Psoas muscle (tissue), 8 donors: ENCODE measurements at regions of chr5 and their contacts with region 1.

Region 1: GRCh38 chr5:160199410-160199911 is 29.8 kb upstream of the FABP6 start:
- DNase-seq: peak; percentile 74 to 83
- ATAC-seq: peak; percentile 94 to 100 (median 96)
- H3K4me3 ChIP-seq: peak overlapping the region; percentile 62
- H3K27ac ChIP-seq: no peak overlapping the region
- H3K4me1 ChIP-seq: peaks cover 4% of the 10 kb centered on the region
- H3K27me3 ChIP-seq: no peaks in the 10 kb centered on the region
- CTCF ChIP-seq: peak; percentile 97

Region 2: DNA sequence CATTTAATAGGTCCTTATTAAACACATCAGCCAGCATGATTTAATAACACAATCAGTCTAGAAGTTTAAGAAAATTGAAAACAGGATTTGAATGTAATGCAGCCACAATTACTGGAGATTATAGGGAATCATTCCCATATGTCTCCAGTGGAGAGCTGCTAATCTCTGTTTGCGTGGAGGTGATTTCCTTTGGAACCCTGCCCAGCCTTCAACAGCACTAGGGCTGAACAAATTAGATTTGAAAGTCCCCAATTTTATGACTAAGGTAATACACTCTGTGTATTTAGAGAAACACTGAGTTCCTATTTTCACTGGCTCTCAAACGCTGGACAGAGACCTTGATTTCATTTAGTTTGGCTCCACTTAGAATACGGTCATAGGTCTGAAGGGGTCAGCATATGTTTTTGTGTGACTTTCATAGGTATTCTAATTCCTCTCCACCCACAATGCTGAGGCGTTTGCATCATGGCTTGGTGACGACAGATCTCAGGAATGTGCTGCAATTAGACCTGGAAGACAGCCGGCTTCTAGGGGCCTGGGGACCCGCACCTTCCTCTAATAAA is 1608.1 kb before region 1 on chr5:
- intact Hi-C with region 1: no loop called
- DNase-seq: no peak
- ATAC-seq: no peak
- H3K4me3 ChIP-seq: no peak overlapping the region
- H3K27ac ChIP-seq: no peak overlapping the region
- H3K4me1 ChIP-seq: no peaks in the 10 kb centered on the region
- H3K27me3 ChIP-seq: no peaks in the 10 kb centered on the region
- CTCF ChIP-seq: no peak

Region 3: DNA sequence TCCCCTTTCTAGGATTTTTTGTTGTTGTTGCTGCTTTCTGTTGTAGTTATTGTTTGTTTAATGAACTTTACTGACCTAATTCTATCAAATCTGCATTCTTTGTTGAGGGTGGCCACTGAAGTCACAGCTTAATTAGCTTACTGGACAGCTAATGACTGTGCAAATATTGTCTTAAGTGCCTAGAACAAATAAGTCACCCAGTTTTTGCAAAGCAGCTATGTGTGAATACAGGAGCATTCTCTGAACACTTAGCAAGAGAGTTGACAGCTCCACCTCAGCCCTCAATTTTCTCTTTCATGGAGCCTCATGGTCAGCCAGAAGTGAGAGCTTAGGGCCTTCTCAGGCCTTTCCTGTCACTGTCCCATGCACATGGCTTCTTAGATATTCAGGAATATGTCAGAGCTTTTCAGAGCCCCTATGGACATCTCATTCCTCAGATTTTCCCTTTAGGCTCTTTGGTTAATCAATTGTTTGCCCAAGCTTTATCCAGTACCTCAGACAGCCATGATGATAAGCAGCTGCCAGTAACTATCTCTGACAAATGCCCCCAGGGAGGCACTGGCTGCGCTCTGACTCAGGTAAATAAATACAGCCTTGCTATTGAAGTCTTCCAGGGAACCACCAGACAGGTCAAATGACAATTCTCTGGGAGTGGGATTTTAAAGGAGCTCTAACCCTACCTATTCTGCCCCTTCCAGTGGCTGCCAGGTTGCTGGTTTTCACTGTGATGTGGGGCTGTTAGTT is 627.8 kb before region 1 on chr5:
- intact Hi-C with region 1: no loop called
- DNase-seq: no peak
- ATAC-seq: no peak
- H3K4me3 ChIP-seq: no peak overlapping the region
- H3K27ac ChIP-seq: no peak overlapping the region
- H3K4me1 ChIP-seq: no peaks in the 10 kb centered on the region
- H3K27me3 ChIP-seq: no peaks in the 10 kb centered on the region
- CTCF ChIP-seq: no peak

Region 4: GRCh38 chr5:160008877-160009590 is 190.4 kb before region 1 on chr5 and contains the start of gene TTC1:
- intact Hi-C with region 1: no loop called
- DNase-seq: peak; percentile 90 to 94
- ATAC-seq: peak; percentile 98 to 100 (median 100)
- H3K4me3 ChIP-seq: peak within 1 kb of the TSS; percentile 91
- H3K27ac ChIP-seq: peak within 1 kb of the TSS; percentile 93
- H3K4me1 ChIP-seq: peaks cover 15% of the 10 kb centered on the region
- H3K27me3 ChIP-seq: no peaks in the 10 kb centered on the region
- CTCF ChIP-seq: no peak
- total RNA-seq, gene TTC1: 55.2 to 64.3 (median 57.8) TPM

Region 5: GRCh38 chr5:160159991-160160792 is 39.3 kb before region 1 on chr5:
- intact Hi-C with region 1: no loop called
- DNase-seq: no peak
- ATAC-seq: no peak
- H3K4me3 ChIP-seq: no peak overlapping the region
- H3K27ac ChIP-seq: no peak overlapping the region
- H3K4me1 ChIP-seq: peaks cover 4% of the 10 kb centered on the region
- H3K27me3 ChIP-seq: no peaks in the 10 kb centered on the region
- CTCF ChIP-seq: no peak

Region 6: GRCh38 chr5:160342403-160342941 is 143.0 kb after region 1 on chr5:
- intact Hi-C with region 1: loop called (anchors 1 to 2 kb)
- DNase-seq: peak in 1 of 2 donors; percentile 21
- ATAC-seq: peak in 3 of 4 donors; percentile 33 to 43 (median 35)
- H3K4me3 ChIP-seq: no peak overlapping the region
- H3K27ac ChIP-seq: no peak overlapping the region
- H3K4me1 ChIP-seq: no peaks in the 10 kb centered on the region
- H3K27me3 ChIP-seq: no peaks in the 10 kb centered on the region
- CTCF ChIP-seq: no peak

Region 7: DNA sequence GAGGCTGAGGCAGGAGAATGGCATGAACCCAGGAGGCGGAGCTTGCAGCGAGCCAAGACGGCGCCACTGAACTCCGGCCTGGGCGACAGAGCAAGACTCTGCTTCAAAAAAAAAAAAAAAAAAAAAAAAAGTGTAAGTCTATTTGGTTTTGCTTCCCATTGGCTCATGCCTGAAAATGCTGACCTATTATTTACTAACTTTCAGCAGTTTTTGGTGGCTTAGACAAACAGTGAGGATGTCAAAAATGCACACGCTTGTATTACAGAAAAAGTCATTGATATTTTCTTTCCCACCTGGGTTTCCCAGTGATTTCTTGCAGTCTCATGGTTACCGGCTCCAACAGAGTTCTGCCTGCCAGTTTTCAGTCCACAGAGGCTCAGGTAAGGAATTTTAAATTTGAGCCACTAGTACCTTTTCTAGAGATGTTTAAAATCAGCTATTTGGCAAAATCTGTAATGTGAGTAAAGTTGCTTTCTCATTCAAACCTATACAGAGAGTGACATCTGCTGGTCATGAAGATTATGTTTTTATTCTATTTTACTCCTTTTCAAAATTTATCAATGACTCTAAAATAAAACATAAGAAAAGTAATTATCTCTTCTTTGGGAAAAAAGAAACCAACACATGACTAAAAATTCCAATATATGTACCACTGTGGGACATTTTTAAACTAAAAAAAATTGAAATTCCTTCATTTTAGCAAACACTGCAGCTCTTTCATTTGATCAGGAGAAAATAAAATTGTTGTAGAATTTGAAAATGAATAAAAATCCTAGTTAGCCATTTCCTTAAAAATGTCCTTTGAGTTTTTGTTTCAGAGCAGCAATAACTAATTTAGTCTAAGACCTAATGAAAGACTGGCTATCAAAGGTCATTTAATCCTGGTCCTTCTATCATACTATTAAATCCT is 191.6 kb after region 1 on chr5:
- intact Hi-C with region 1: loop called (anchors 2 kb)
- DNase-seq: no peak
- ATAC-seq: peak in 1 of 4 donors; percentile 60
- H3K4me3 ChIP-seq: no peak overlapping the region
- H3K27ac ChIP-seq: no peak overlapping the region
- H3K4me1 ChIP-seq: no peaks in the 10 kb centered on the region
- H3K27me3 ChIP-seq: no peaks in the 10 kb centered on the region
- CTCF ChIP-seq: peak; percentile 49